Heart right ventricle (tissue), 16 donors: ENCODE measurements at regions of chr6 and their contacts with region 1.

Region 1: GRCh38 chr6:108755257-108756240 is 92.7 kb upstream of the ARMC2 start:
- DNase-seq: no peak
- ATAC-seq: peak; percentile 20 to 73 (median 41)
- H3K4me3 ChIP-seq: no peak overlapping the region
- H3K27ac ChIP-seq: peak overlapping the region in 8 of 10 donors; percentile 24 to 68 (median 34)
- H3K4me1 ChIP-seq: peaks cover 4 to 36% (median 17%) of the 10 kb centered on the region in 9 donors
- H3K27me3 ChIP-seq: no peaks in the 10 kb centered on the region
- CTCF ChIP-seq: no peak

Region 2: DNA sequence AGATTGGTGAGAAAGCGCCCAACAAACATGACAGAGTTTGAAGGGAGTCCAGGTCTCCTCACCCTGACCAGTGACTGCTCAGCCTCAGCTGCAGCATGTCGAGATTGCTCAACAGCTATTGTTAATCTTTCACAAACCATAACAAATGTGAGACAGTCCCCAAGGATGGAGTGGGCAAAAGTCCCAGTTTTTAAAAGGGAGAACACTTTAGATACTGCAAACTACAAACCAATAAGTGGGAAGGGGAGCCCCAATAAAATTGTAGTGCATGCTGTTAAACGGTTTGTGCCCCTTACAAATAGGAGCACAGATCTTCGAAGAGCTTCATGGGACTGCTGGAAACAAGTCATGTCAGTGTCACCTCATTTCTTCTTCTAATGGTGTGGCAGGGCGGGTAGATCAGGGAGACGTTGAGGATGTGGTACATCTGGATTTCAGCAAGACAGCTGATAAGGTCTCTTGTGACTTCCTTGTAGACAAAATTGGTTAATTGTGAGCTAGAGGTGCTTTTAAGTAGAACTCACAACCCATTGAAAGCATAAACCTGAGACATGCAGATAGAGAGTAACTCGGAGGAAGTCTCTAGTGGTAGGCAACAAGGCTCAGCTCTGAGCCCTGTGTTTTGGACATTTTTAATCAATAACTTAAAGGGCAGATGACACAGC is 41.3 kb before region 1 on chr6:
- intact Hi-C with region 1: loop called in 1 of 10 experiments (anchors 5 kb)
- DNase-seq: peak in 1 of 2 donors; percentile 43
- ATAC-seq: peak in 5 of 8 donors; percentile 46 to 80 (median 58)
- H3K4me3 ChIP-seq: no peak overlapping the region
- H3K27ac ChIP-seq: peak overlapping the region in 3 of 10 donors; percentile 29 to 36 (median 33)
- H3K4me1 ChIP-seq: peaks cover 0 to 41% (median 19%) of the 10 kb centered on the region in 9 donors
- H3K27me3 ChIP-seq: no peaks in the 10 kb centered on the region
- CTCF ChIP-seq: no peak

Region 3: GRCh38 chr6:108825326-108825725 is 69.8 kb after region 1 on chr6:
- intact Hi-C with region 1: loop called in 1 of 10 experiments (anchors 2 kb)
- DNase-seq: no peak
- ATAC-seq: no peak
- H3K4me3 ChIP-seq: no peak overlapping the region
- H3K27ac ChIP-seq: no peak overlapping the region
- H3K4me1 ChIP-seq: peaks cover 0 to under 1% (median 0%) of the 10 kb centered on the region in 9 donors
- H3K27me3 ChIP-seq: no peaks in the 10 kb centered on the region
- CTCF ChIP-seq: no peak